Heart left ventricle (tissue), 16 donors: ENCODE measurements at regions of chr4 and their contacts with region 1.

Region 1: DNA sequence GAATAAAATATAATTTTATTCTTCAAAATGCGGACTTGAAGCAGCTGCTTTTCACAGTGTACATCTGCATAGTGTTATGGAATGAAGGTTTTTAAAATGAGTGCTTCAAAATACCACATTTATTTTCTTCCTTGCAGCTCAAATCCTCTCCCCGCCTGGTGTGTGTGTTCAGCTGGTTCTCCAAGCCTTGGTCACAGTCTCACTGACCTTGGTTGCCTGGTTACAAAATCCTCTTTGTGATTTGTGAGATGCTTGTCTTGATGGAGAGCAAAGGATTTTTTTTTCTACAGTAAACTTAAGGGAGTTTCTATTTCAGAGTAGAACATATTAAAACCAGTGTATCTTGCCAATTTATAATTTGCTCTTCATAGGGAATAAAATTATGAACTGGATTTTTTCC is 139.2 kb downstream of the PCDH18 start:
- DNase-seq: peak in 3 of 5 donors; percentile 31 to 44 (median 32)
- ATAC-seq: peak in 3 of 4 donors; percentile 54 to 74 (median 62)
- H3K4me3 ChIP-seq: no peak overlapping the region
- H3K27ac ChIP-seq: peak overlapping the region in 7 of 12 donors; percentile 8 to 37 (median 15)
- H3K4me1 ChIP-seq: peaks cover 0 to 19% (median 0%) of the 10 kb centered on the region in 12 donors
- H3K27me3 ChIP-seq: no peaks in the 10 kb centered on the region
- CTCF ChIP-seq: no peak
- POLR2A ChIP-seq: no peak

Region 2: GRCh38 chr4:137283737-137284136 is 109.3 kb before region 1 on chr4:
- intact Hi-C with region 1: no loop called
- DNase-seq: no peak
- ATAC-seq: no peak
- H3K4me3 ChIP-seq: no peak overlapping the region
- H3K27ac ChIP-seq: no peak overlapping the region
- H3K4me1 ChIP-seq: no peaks in the 10 kb centered on the region
- H3K27me3 ChIP-seq: no peaks in the 10 kb centered on the region
- CTCF ChIP-seq: peak in 9 of 12 donors; percentile 14 to 48 (median 30)
- POLR2A ChIP-seq: no peak

Region 3: GRCh38 chr4:137378821-137379220 is 14.2 kb before region 1 on chr4:
- intact Hi-C with region 1: no loop called
- DNase-seq: no peak
- ATAC-seq: no peak
- H3K4me3 ChIP-seq: no peak overlapping the region
- H3K27ac ChIP-seq: no peak overlapping the region
- H3K4me1 ChIP-seq: peaks cover 0 to 10% (median 0%) of the 10 kb centered on the region in 12 donors
- H3K27me3 ChIP-seq: no peaks in the 10 kb centered on the region
- CTCF ChIP-seq: no peak
- POLR2A ChIP-seq: no peak

Region 4: DNA sequence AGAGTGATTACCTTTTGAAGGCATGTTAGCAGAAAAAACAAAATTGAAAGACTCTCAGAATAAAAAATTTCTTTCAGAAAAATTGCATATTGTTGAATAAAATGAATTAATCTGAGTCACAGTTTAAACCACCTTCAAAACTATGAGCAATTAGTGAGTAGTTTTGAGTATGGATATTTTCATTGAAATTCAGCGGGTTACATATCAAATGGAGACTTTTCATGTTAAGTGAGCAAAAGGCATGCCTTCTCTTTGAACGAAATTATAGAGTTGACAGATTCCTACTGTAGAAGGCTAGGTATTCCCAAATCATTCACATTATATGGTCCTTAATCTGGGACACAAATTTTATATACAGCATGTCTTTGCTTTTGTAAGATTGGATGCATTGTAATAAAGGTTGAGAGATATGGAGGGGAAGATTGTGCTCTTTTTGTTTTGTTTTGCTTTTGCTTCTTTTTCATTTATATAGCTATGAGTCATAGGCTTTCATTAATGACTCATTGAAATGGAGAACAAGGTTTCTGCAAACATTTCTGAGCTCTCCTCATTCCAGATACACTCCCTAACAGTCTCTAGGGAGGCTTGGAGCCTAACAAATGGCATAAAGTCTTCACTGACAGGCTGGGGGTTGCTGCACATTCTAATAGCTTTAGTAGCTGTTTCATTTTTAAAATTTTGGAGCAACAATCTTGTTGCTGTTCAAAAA is 117.7 kb after region 1 on chr4:
- intact Hi-C with region 1: loop called in 1 of 10 experiments (anchors 10 kb)
- DNase-seq: peak in 2 of 5 donors; percentile 37 to 42
- ATAC-seq: peak; percentile 67 to 98 (median 86)
- H3K4me3 ChIP-seq: peak overlapping the region in 6 of 12 donors; percentile 9 to 32 (median 18)
- H3K27ac ChIP-seq: peak overlapping the region in 10 of 12 donors; percentile 0 to 63 (median 21)
- H3K4me1 ChIP-seq: no peaks in the 10 kb centered on the region
- H3K27me3 ChIP-seq: no peaks in the 10 kb centered on the region
- CTCF ChIP-seq: no peak
- POLR2A ChIP-seq: no peak

Region 5: DNA sequence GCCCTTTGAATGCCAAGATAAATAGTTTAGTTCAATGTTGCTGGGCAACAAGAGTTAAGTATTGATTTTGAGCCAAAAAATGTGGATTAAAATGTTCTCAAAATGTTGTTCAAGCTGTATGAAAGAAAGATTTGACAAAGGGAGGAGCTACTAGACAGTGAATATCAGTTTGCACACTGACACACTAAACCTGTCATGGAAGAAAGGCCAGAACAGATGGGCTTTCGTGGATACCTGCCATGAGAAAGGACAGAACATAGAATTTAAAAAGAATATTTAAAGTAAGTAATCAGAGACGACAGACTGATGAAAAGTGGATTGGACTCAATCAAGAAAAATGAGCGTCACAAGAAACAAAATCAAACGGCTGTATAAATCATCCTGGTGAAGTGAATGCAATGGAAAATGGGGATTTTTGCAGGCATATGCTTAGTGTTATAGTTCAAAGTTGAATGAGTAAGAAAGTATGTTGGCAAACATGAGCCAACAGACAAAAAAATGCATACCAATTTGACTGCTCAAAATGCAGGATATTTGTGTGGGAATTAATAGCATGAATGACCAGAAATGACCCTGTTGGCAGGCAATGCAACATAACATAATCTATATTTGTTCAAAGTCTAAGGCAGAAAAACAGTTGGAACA is 131.8 kb after region 1 on chr4:
- intact Hi-C with region 1: loop called in 4 of 10 experiments (anchors 5 to 10 kb)
- DNase-seq: no peak
- ATAC-seq: no peak
- H3K4me3 ChIP-seq: peak overlapping the region in 1 of 12 donors; percentile 25
- H3K27ac ChIP-seq: peak overlapping the region in 1 of 12 donors; percentile 6
- H3K4me1 ChIP-seq: peaks cover 0 to 28% (median 0%) of the 10 kb centered on the region in 12 donors
- H3K27me3 ChIP-seq: no peaks in the 10 kb centered on the region
- CTCF ChIP-seq: no peak
- POLR2A ChIP-seq: no peak